Kidney (tissue), 22 donors: ENCODE measurements at regions of chr21 and their contacts with region 1.

Region 1: GRCh38 chr21:45443595-45444181 is 38.7 kb downstream of the COL18A1 start:
- DNase-seq: peak in 1 of 5 donors; percentile 67
- H3K4me3 ChIP-seq: no peak overlapping the region
- H3K27ac ChIP-seq: no peak overlapping the region
- H3K4me1 ChIP-seq: peaks cover 0 to 11% (median 6%) of the 10 kb centered on the region in 3 donors
- H3K27me3 ChIP-seq: no peaks in the 10 kb centered on the region
- CTCF ChIP-seq: no peak

Region 2: DNA sequence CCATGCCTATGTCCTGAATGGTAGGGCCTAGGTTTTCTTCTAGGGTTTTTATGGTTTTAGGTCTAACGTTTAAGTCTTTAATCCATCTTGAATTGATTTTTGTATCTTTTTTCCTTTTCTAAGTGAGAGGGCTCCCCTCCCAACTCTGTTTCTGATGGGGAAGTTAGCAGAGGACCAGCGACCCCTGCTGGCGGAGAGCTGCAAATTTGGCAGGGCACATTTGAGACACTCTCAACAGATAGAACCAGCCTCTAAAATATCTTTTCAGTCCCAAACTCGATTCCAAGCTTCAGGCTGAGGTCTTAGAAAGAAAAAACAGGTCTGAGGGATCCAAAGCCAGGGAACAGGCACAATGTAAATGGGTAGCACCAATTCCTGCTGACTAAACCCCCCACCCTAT is 955.9 kb before region 1 on chr21:
- intact Hi-C with region 1: no loop called
- DNase-seq: no peak
- H3K4me3 ChIP-seq: no peak overlapping the region
- H3K27ac ChIP-seq: no peak overlapping the region
- H3K4me1 ChIP-seq: no peaks in the 10 kb centered on the region
- H3K27me3 ChIP-seq: no peaks in the 10 kb centered on the region
- CTCF ChIP-seq: no peak

Region 3: GRCh38 chr21:45019076-45019956 is 424.4 kb before region 1 on chr21:
- intact Hi-C with region 1: no loop called
- DNase-seq: peak; percentile 38 to 83 (median 67)
- H3K4me3 ChIP-seq: no peak overlapping the region
- H3K27ac ChIP-seq: no peak overlapping the region
- H3K4me1 ChIP-seq: peaks cover 0 to 6% (median 0%) of the 10 kb centered on the region in 3 donors
- H3K27me3 ChIP-seq: no peaks in the 10 kb centered on the region
- CTCF ChIP-seq: no peak

Region 4: DNA sequence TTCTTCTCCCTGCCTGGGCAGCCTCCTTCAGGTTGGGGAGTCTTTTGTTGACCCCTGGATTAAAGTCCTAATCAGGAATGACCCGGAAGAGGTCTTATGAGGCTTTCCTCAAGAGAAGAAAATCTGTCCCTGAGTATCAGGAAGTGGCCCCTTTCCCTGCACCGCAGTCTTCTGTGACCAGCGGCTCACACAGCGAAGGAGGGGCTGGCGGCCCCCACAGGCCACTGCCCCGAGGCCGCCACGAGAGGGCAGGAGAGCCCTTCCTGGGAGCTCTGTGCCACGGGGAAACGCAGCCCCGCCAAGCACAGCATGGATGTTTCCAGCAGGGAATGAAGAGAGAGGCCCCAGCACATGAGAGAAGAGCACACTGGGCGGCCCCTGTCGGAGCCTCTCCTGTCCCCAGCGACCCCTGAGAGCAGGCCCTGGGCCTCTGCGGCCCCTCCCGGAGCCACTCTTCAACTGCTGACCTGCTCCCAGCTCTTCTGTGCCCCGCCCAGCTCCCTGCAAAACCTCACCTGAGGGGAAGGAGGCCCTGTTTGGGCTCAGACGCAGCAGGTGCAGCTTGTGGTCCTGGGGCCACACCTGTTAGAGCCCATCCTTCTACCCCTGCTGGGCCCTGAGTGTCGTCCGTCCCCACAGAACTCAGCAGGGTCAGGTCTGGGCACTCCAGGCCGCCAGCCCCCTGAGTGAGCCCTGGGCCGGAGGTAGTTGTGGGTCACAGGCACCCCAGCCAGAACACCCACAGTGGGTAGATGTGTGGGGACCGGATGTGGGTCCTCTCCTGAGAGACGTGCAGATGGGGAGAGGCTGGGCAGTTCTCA is 151.1 kb before region 1 on chr21:
- intact Hi-C with region 1: loop called (anchors 5 kb)
- DNase-seq: peak; percentile 93 to 96 (median 95)
- H3K4me3 ChIP-seq: no peak overlapping the region
- H3K27ac ChIP-seq: peak overlapping the region; percentile 83 to 89
- H3K4me1 ChIP-seq: peaks cover 0 to 34% (median 29%) of the 10 kb centered on the region in 3 donors
- H3K27me3 ChIP-seq: no peaks in the 10 kb centered on the region
- CTCF ChIP-seq: peak; percentile 99

Region 5: DNA sequence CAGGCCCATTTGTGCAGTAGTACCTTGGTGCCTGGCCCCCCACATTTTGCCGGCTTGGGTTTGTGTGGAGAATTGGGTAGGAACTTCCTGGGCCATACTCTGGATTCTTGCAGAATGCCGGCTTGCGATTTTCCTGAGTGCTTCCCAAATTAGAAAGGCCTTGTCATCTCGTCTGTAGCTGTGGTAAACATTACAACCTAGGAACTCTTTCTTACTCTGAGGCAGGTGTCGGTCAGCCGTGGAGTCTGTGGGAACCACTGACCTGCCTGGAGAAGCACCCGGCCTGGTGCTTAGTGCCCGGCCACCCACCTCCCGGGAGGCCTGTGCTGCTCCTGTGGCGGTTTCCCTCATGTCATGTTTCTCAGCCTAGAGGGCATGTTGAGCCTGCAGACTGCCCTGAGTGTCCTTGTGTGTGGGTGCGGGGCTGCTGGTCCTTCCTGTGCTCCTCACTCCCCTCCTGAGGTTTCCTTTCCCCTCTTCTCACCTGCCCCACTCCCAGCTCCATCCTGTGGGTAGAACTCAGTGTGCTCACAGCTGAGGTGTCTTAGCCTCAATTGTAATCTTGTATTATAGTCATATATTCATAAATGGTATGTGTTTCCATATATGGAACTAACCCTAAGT is 1096.5 kb after region 1 on chr21:
- intact Hi-C with region 1: no loop called
- DNase-seq: no peak
- H3K4me3 ChIP-seq: no peak overlapping the region
- H3K27ac ChIP-seq: no peak overlapping the region
- H3K4me1 ChIP-seq: no peaks in the 10 kb centered on the region
- H3K27me3 ChIP-seq: no peaks in the 10 kb centered on the region
- CTCF ChIP-seq: no peak